ENCODE measurements at regions of chr2 and their contacts with region 1.

Region 1: GRCh38 chr2:215680605-215681598 is 245.0 kb upstream of the FN1 start:
- DNase-seq: peak; percentile 73
- H3K4me3 Mint-ChIP-seq: peak overlapping the region; percentile 28
- H3K27ac Mint-ChIP-seq: peak overlapping the region; percentile 94
- H3K4me1 Mint-ChIP-seq: peaks cover 61% of the 10 kb centered on the region
- H3K27me3 Mint-ChIP-seq: no peaks in the 10 kb centered on the region
- CTCF ChIP-seq: no peak

Region 2: GRCh38 chr2:215531284-215531683 is 149.6 kb before region 1 on chr2:
- CTCF ChIA-PET with region 1: no interaction called
- intact Hi-C with region 1: loop called (anchors 5 kb)
- DNase-seq: peak; percentile 13
- H3K4me3 Mint-ChIP-seq: no peak overlapping the region
- H3K27ac Mint-ChIP-seq: peak overlapping the region; percentile 80
- H3K4me1 Mint-ChIP-seq: peaks cover 54% of the 10 kb centered on the region
- H3K27me3 Mint-ChIP-seq: no peaks in the 10 kb centered on the region
- CTCF ChIP-seq: no peak

Measured in Calu3 (cell line).